Activated T-helper 1 cell treated with anti-CD3 and anti-CD28 coated beads, Interleukin-12 subunit alpha, Interleukin-12 subunit beta, Interleukin-2, Interleukin-4 antibody, amounts not matched to agents 30 ng/mL and 10 ng/mL and 1 ng/mL, durations not matched to agents 14 hours and 24 hours and 36 hours (primary cell): ENCODE measurements at regions of chr11 and their contacts with region 1.

Region 1: GRCh38 chr11:103601225-103601846 is 435.1 kb upstream of the DDI1 start:
- DNase-seq: peak; percentile 1
- H3K4me3 Mint-ChIP-seq: no peak overlapping the region
- H3K27ac Mint-ChIP-seq: no peak overlapping the region
- H3K4me1 Mint-ChIP-seq: no peaks in the 10 kb centered on the region
- H3K27me3 Mint-ChIP-seq: peaks cover 7% of the 10 kb centered on the region

Region 2: GRCh38 chr11:103257360-103257759 is 344.0 kb before region 1 on chr11:
- intact Hi-C with region 1: loop called (anchors 5 kb)
- DNase-seq: no peak
- H3K4me3 Mint-ChIP-seq: no peak overlapping the region
- H3K27ac Mint-ChIP-seq: no peak overlapping the region
- H3K4me1 Mint-ChIP-seq: no peaks in the 10 kb centered on the region
- H3K27me3 Mint-ChIP-seq: no peaks in the 10 kb centered on the region

Region 3: GRCh38 chr11:103420593-103420992 is 180.7 kb before region 1 on chr11:
- intact Hi-C with region 1: no loop called
- DNase-seq: no peak
- H3K4me3 Mint-ChIP-seq: no peak overlapping the region
- H3K27ac Mint-ChIP-seq: no peak overlapping the region
- H3K4me1 Mint-ChIP-seq: no peaks in the 10 kb centered on the region
- H3K27me3 Mint-ChIP-seq: no peaks in the 10 kb centered on the region